Dendritic cell treated with granulocyte-macrophage colony-stimulating factor and Interleukin-4, amounts not matched to agents 40 ng/mL and 50 ng/mL, for 4 days (primary cell): ENCODE measurements at regions of chr12 and their contacts with region 1.

Region 1: DNA sequence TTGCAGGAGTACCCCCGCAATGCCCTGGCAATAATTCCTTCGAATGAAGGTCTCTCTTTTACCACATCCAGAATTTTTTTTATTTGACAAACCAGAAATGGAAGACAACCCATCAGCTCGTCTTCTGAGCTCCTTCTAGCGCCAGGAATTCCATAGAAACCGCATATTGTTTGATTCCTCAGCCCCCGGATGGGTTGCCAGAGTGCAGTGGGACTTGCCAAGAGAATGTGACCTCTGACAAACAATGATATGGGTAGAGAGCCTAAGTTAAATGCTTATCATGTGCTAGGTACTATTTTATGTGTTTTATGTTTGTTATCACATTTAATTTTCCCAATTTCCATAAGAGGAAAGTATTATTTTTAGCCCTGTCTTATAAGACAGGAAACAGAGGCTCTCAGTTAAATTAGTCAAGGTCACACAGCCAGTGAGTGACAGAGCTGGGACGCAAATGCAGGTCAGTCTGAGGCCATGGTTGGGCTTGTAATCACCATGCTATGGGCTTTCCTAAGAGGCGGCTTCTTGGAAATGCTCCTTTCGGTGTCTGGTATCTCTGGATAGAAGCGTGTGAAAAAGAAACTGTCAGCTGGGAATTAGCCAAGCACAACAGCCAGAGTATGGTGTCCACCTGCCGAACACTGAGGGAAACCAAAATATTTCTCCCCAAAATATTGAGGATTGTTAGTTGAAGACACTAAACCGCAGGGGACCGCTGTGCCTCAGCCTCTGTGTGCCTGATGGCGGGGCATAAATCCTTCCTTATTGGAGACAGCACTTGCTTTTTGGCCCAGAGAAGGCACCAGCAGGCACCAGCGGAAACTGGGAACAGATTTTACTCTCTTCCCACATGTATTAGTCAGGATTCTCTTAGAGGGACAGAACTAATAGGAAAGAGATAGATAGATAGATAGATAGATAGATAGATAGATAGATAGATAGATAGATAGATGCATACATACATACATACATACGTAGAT is 29.4 kb upstream of the ETFBKMT start:
- H3K4me3 Mint-ChIP-seq: no peak overlapping the region
- H3K27ac Mint-ChIP-seq: no peak overlapping the region
- H3K4me1 Mint-ChIP-seq: peaks cover 17% of the 10 kb centered on the region
- H3K27me3 Mint-ChIP-seq: peaks cover 20% of the 10 kb centered on the region

Region 2: GRCh38 chr12:31250179-31250578 is 379.9 kb before region 1 on chr12:
- intact Hi-C with region 1: loop called (anchors 10 kb)
- H3K4me3 Mint-ChIP-seq: no peak overlapping the region
- H3K27ac Mint-ChIP-seq: no peak overlapping the region
- H3K4me1 Mint-ChIP-seq: peaks cover 11% of the 10 kb centered on the region
- H3K27me3 Mint-ChIP-seq: peaks cover 3% of the 10 kb centered on the region

Region 3: DNA sequence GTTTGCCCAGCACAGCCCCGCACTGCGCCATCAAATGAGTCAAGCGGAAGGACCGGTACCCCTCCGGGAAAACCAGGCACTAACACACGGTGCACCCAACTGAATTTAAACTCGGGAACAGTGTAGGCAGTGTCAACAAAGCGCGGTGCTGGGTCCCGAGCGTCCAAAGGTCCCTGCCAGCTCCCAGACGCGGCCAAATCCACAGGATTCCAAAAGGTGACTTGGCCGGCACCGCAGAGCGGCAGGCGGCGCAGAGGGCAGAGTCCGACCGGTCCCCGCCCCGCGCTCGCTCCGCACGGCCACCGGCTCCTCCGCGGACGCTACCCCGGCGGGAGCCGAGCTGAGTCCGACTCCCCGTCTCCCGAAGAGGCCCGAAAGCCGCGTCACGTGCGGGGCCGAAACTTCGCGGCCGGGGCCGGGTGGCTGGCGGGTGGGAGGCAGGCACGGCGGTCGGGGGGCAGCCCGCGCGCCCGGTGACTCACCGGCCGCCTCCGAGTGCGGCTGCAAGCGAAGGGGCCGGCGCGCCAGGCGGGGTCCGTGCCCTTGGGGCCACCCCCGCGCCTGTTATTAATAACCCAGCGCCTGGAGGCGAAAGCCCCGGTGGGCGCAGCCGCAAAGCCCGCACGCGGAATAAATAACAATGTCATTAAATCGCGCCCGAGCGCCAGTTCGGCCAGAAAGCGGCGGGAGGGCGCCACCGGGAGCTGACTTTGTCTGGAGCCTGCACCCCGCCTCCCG is 40.0 kb before region 1 on chr12:
- intact Hi-C with region 1: loop called (anchors 5 kb)
- H3K4me3 Mint-ChIP-seq: peak overlapping the region; percentile 87
- H3K27ac Mint-ChIP-seq: peak overlapping the region; percentile 42
- H3K4me1 Mint-ChIP-seq: peaks cover 13% of the 10 kb centered on the region
- H3K27me3 Mint-ChIP-seq: peaks cover 37% of the 10 kb centered on the region

Region 4: DNA sequence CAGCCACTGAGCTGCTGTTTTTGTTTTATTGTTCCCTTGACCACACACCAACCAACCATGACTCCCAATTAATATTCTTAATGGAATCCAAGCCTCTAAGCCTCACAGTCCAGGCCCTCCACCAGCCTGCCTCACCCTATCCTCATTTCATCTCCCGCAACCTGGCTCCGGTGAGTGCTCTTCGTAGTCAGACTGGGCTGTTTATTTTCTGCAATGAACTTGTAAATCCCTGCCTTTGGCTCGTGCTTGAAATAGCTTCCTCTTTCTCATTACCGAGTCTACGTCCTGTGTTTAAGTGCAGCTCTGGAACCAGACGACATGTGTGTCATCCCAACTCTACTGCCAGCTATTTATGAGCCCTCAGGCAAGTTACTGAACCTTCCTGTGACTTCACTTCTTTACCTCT is 17.0 kb after region 1 on chr12:
- intact Hi-C with region 1: no loop called
- H3K4me3 Mint-ChIP-seq: peak overlapping the region; percentile 42
- H3K27ac Mint-ChIP-seq: peak overlapping the region; percentile 79
- H3K4me1 Mint-ChIP-seq: peaks cover 19% of the 10 kb centered on the region
- H3K27me3 Mint-ChIP-seq: peaks cover 3% of the 10 kb centered on the region